Activated CD4-positive, alpha-beta T cell treated with anti-CD3 and anti-CD28 coated beads, Interleukin-2, amount 10 ng/mL, durations not matched to agents 7 days and 5 days (primary cell): ENCODE measurements at regions of chr17 and their contacts with region 1.

Region 1: GRCh38 chr17:78970834-78971773 is 8.6 kb downstream of the LGALS3BP start:
- DNase-seq: peak; percentile 82
- H3K4me3 Mint-ChIP-seq: no peak overlapping the region
- H3K27ac Mint-ChIP-seq: peak overlapping the region; percentile 10
- H3K4me1 Mint-ChIP-seq: peaks cover 18% of the 10 kb centered on the region
- H3K27me3 Mint-ChIP-seq: no peaks in the 10 kb centered on the region

Region 2: GRCh38 chr17:77942112-77942988 is 1028.8 kb before region 1 on chr17:
- CTCF ChIA-PET with region 1: no interaction called
- POLR2A ChIA-PET with region 1: no interaction called
- DNase-seq: no peak
- H3K4me3 Mint-ChIP-seq: no peak overlapping the region
- H3K27ac Mint-ChIP-seq: no peak overlapping the region
- H3K4me1 Mint-ChIP-seq: no peaks in the 10 kb centered on the region
- H3K27me3 Mint-ChIP-seq: peaks cover 5% of the 10 kb centered on the region

Region 3: DNA sequence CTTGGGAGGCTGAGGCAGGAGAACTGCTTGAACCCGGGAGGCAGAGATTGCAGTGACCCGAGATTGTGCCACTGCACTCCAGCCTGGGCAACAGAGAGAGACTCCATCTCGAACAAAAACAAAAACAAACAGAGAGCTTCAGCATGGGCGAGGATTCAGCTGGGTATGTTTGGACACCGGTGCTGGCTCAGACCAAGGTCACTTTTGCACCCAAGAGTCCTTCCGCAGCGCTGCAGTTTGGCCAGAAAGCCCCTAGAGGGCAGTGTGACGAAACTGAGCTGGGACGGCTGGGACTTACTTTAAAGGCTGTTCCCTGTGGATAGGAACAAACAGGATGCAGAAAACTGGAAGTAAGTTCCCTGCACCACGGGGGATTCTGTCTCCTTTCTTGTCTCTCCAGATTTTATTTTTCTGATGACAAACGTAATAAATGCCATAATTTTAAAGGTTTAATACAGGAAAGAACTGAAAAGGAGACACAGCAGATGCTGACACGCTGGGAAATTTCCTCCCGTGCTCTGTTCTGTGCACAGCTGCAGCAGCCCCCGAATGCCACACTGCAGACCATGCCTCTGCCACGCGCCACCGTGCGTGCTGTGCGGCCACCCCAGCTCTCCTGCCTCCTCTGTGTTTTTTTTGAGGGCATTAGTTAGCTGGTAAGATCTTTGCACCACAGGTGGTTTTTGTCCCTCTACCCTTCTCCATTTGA is 105.3 kb before region 1 on chr17:
- CTCF ChIA-PET with region 1: interaction called, 20 read pairs
- POLR2A ChIA-PET with region 1: no interaction called
- DNase-seq: peak; percentile 70
- H3K4me3 Mint-ChIP-seq: no peak overlapping the region
- H3K27ac Mint-ChIP-seq: no peak overlapping the region
- H3K4me1 Mint-ChIP-seq: peaks cover 4% of the 10 kb centered on the region
- H3K27me3 Mint-ChIP-seq: peaks cover 2% of the 10 kb centered on the region

Region 4: DNA sequence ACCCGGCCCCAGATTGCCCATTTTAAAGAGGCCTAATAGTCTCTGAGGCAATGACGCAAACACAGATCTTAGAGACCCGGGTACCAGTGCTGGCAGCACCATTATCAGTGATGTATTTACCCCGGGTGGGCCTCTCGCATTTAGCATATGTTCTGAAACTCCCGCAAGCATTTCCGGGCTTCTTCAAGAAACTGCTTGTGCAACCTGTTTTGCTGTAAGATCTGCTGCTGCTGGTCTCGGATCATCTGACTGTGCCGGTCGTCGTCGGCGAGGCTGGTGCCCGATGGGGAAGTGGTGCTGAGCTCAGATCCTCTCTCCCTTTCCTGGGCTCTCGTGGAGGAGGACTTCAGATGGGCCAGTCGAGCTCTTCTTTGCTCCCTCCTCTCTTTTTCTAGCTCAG is 80.6 kb before region 1 on chr17:
- CTCF ChIA-PET with region 1: no interaction called
- POLR2A ChIA-PET with region 1: no interaction called
- DNase-seq: peak; percentile 73
- H3K4me3 Mint-ChIP-seq: no peak overlapping the region
- H3K27ac Mint-ChIP-seq: peak overlapping the region; percentile 91
- H3K4me1 Mint-ChIP-seq: peaks cover 43% of the 10 kb centered on the region
- H3K27me3 Mint-ChIP-seq: peaks cover 1% of the 10 kb centered on the region

Region 5: GRCh38 chr17:78903101-78903779 is 67.9 kb before region 1 on chr17 and contains the start of gene CEP295NL:
- CTCF ChIA-PET with region 1: no interaction called
- POLR2A ChIA-PET with region 1: no interaction called
- DNase-seq: no peak
- H3K4me3 Mint-ChIP-seq: no peak within 1 kb of the TSS
- H3K27ac Mint-ChIP-seq: no peak within 1 kb of the TSS
- H3K4me1 Mint-ChIP-seq: peaks cover 10% of the 10 kb centered on the region
- H3K27me3 Mint-ChIP-seq: no peaks in the 10 kb centered on the region
- total RNA-seq, gene CEP295NL: 0.10 TPM in 1 of 2 experiments, not detected in the other

Region 6: DNA sequence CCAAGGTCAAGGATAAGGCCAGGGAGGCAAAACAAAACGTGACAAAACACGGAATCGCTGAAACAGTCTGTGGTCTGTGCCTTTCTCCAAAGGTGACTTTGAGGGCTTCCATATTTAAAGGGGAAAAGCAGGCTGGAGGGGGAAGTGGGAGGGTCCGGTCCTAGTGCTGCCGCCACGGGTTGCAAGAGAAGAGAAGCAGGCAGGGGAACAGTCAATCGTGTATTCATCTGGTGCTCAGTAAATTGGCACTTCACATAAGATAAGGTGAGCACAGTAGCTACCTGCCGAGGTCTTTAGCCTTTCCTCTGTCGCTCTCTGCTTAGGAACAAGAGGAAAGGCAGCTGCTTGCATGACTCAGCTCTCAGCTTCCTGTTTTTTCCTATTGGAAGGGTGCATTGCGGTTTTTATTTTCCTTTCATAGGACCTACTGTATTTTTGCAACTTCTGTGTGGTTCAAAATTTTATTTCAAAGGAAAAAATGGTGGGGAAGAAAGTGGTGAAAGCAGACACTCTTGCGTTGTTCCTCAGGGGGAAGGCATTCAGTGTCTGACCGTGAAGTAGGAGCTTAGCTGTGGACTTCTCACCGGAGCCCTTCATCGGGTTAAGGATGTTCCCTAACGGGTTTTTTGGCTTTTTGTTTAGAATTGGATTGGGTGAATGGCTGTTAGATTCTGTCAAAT is 15.7 kb after region 1 on chr17:
- CTCF ChIA-PET with region 1: no interaction called
- POLR2A ChIA-PET with region 1: no interaction called
- DNase-seq: no peak
- H3K4me3 Mint-ChIP-seq: peak overlapping the region; percentile 22
- H3K27ac Mint-ChIP-seq: peak overlapping the region; percentile 74
- H3K4me1 Mint-ChIP-seq: peaks cover 15% of the 10 kb centered on the region
- H3K27me3 Mint-ChIP-seq: no peaks in the 10 kb centered on the region